Activated T-helper 1 cell treated with anti-CD3 and anti-CD28 coated beads, Interleukin-12 subunit alpha, Interleukin-12 subunit beta, Interleukin-2, Interleukin-4 antibody, amounts not matched to agents 30 ng/mL and 10 ng/mL and 1 ng/mL, durations not matched to agents 14 hours and 24 hours and 36 hours (primary cell): ENCODE measurements at regions of chr16 and their contacts with region 1.

Region 1: DNA sequence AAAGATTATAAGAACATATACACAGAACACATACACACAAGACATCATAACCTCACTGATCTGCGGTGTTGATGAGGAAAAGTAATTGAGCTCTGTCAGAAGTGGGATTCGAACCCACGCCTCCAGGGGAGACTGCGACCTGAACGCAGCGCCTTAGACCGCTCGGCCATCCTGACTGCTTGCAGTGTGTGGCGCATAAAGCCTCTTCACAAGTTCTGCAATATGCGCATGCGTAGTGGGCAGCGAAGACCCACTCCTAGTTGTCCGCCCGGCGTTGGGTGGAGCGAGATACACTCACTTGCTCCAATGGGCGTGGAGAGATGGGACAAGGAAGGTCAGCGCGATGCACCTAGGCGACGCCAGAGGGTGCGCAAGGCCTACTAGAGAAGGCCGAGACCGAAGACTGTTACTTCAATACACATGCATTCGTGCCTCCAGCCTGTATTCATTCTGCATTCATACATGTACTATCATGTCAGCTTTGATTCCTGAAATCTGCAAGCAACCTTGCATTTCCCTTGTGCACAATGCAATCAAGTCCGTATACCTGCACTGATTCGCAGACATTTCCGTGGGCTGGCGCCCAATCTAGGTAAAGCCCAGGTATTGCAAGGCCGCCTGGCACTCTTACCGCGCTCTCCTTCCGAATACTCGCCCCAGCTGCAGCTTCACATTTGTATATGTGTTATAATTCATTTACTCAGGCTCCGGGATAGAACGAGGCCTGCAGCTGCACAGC is 16.1 kb upstream of the PLLP start:
- DNase-seq: peak; percentile 99
- H3K4me3 Mint-ChIP-seq: no peak overlapping the region
- H3K27ac Mint-ChIP-seq: no peak overlapping the region
- H3K4me1 Mint-ChIP-seq: peaks cover 18% of the 10 kb centered on the region
- H3K27me3 Mint-ChIP-seq: peaks cover 7% of the 10 kb centered on the region

Region 2: DNA sequence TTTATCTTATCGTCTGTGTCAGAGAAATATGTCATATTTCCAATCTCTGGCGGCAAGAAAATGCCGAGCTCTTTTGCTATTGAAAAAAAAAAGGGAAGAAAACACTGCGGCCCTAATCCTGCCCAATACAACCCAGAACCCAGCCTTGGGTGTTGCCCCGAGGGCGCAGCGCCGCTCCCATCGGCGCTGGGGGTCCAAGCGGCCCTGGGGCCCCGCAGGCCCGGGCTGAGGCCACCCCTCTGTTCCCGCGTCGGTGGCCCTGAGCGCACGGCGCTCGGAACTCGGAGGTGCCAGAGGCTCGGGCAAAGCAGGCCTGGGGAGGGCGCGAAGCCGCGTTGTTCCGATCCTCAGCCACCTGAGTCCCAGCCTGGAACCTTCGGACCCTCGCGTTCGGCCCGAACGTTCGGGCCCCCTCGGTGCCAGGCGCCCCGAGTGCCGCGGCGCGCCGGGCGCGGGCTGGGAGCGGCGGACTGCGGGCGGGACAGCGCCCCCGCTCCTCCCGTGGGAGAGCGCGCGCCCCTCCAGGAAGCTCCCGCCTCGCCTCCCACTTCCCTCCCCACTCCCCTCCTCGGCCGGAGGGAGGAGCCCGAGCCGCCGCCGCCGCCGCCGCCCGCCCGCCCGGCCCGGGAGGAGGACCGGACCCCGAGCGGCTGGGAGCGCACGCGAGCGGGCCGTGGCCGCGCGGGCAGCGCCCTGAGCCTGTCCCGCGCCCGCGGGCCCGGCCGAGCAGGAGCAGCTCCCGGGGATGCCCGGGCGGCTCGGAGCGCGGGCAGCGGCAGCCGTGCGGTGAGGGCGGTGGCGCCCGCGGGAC is 208.4 kb before region 1 on chr16 and contains the start of gene CPNE2:
- intact Hi-C with region 1: loop called (anchors 1 kb)
- DNase-seq: peak; percentile 34
- H3K4me3 Mint-ChIP-seq: peak within 1 kb of the TSS; percentile 84
- H3K27ac Mint-ChIP-seq: peak within 1 kb of the TSS; percentile 75
- H3K4me1 Mint-ChIP-seq: peaks cover 7% of the 10 kb centered on the region
- H3K27me3 Mint-ChIP-seq: peaks cover 22% of the 10 kb centered on the region
- total RNA-seq, gene CPNE2: 3.7 and 4.6 TPM in 2 replicates

Region 3: DNA sequence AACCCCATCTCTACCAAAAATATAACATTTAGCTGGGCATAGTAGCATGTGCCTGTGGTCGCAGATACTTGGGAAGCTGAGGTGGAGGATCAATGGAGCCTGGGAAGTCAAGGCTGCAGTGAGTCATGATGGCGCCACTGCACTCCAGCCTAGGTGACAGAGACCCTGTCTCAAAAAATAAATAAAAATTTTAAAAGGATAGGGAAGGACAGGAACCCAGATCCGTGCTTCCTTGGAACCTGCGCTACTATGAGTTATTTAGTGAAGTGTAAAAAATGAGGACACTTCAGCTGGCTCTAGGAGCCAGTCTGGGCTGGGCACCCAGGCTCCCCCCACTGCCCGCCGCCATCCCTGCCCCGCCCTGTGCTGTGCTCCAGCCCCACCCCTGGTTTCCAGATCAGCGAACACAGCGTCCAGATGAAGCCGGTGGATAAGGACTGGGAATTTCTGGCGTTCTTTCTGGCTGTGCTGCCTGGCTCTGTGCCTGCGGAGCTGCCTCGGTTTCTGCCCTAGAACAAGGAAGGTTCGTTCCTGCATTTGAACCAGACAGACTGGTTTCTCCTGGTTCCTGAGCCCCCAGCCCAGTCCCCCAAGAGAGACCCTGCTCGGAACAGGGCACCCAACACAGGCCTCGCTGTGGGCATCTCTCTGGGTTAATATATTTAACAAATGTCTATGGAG is 34.6 kb before region 1 on chr16:
- intact Hi-C with region 1: no loop called
- DNase-seq: no peak
- H3K4me3 Mint-ChIP-seq: peak overlapping the region; percentile 43
- H3K27ac Mint-ChIP-seq: peak overlapping the region; percentile 75
- H3K4me1 Mint-ChIP-seq: peaks cover 13% of the 10 kb centered on the region
- H3K27me3 Mint-ChIP-seq: no peaks in the 10 kb centered on the region

Region 4: DNA sequence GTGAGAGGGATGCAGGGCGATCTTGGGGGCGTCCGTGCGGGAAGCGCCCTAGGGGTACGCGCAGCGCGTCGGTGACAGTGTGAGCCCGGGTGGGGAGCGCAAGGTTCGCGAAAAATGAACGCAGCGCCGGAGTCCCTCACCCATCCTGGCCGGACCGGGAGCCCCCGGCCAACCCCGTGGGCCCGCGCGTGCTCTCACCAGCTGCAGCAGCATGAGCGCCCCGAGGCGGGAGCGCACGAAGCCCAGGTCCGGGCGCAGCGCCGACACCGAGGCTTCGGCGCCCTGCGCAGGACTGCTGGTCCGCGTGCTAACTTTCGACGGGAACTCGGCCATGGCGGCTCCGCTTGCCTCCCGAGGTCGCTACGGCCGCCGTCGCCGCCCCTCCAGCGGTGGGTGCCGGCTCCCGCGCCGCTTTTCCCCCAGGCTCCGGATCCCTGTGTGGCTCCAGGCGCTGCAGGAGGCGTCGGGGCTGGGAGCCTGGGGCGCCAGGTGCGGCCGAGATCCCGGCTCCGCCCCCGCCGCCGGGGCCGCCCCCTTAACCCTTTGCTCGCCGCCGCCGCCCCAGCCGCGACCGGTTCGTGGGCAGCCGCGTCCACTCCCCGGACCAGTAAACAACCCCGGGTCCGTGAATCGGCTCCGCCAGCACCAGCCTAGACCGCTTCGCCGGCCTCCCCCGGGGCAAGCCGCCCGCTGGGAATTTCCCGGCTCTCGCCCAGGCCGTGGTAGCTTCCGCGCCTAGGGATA is 16.2 kb before region 1 on chr16 and contains the start of gene PLLP:
- intact Hi-C with region 1: loop called (anchors 1 kb)
- DNase-seq: peak; percentile 24
- H3K4me3 Mint-ChIP-seq: peak within 1 kb of the TSS; percentile 80
- H3K27ac Mint-ChIP-seq: peak within 1 kb of the TSS; percentile 18
- H3K4me1 Mint-ChIP-seq: peaks cover 8% of the 10 kb centered on the region
- H3K27me3 Mint-ChIP-seq: peaks cover 40% of the 10 kb centered on the region
- total RNA-seq, gene PLLP: 0.26 TPM in 1 of 2 replicates, not detected in the other

Region 5: DNA sequence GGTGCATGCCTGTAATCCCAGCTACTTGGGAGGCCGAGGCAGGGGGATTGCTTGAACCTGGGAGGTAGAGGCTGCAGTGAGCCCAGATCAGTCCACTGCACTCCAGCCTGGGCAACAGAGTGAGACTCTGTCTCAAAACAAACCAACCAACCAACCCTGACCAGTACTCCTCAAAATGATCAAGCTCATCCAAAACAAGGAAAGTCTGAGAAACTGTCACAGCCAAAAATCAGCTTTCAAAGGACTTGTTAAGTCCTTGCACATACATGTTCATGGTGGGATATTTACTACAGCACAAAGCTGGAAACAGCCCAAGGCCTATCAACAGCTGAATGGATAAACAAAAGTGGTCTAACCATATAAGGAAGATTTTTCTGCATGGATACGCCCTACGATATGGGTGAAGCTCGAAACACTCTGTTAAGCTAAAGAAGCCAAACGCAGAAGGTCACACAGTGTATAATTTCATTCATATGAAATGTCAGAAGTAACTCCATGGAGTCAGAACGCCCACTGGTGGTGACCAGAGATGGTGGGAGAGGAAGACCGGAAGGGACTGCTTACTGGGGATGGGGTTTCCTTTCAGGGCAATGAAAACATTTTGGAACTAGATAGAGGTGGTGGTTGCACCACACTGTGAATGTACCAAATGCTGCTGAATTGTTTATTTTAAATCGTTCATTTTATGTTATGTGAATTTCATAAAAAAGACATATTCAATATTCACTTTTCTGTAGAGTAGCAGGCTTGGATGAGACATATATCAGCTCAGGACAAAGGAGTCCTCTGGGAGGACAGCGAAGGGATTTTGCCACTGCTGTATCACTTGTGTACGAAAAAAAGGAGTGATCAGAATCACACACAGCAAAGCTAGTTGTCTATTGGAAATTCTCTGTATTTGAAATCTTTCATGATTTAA is 121.7 kb after region 1 on chr16:
- intact Hi-C with region 1: loop called (anchors 1 kb)
- DNase-seq: no peak
- H3K4me3 Mint-ChIP-seq: no peak overlapping the region
- H3K27ac Mint-ChIP-seq: no peak overlapping the region
- H3K4me1 Mint-ChIP-seq: peaks cover 14% of the 10 kb centered on the region
- H3K27me3 Mint-ChIP-seq: no peaks in the 10 kb centered on the region

Region 6: DNA sequence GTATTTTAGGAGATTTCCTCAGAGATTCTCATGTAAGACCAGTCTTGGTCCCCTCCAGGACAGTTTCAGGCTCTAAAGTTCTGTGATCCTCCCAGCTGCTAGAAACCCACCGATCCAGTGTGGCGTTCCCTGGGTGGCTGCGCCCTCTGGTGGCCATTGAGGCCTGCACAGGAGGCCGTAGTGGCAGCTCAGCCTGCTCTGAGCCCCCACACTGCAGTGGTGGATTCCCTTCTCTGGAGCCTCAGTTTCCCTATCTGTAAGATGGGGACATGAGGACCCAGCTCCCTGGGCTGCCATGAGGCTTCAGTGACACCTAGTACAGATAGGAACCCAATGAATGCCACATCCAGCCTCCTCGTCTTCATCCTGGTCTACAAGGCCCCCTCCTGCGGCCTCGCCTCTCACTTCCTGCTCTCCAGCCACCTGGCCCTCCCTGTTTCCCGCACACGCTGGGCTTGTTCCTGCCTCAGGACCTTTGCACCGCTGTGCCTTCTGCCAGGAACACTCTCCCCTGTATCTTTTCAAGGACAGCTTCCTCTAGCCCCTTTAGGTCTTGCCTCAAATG is 219.3 kb after region 1 on chr16:
- intact Hi-C with region 1: loop called (anchors 1 kb)
- DNase-seq: peak; percentile 69
- H3K4me3 Mint-ChIP-seq: no peak overlapping the region
- H3K27ac Mint-ChIP-seq: peak overlapping the region; percentile 65
- H3K4me1 Mint-ChIP-seq: peaks cover 21% of the 10 kb centered on the region
- H3K27me3 Mint-ChIP-seq: no peaks in the 10 kb centered on the region